ENCODE measurements at regions of chr2 and their contacts with region 1.

Region 1: DNA sequence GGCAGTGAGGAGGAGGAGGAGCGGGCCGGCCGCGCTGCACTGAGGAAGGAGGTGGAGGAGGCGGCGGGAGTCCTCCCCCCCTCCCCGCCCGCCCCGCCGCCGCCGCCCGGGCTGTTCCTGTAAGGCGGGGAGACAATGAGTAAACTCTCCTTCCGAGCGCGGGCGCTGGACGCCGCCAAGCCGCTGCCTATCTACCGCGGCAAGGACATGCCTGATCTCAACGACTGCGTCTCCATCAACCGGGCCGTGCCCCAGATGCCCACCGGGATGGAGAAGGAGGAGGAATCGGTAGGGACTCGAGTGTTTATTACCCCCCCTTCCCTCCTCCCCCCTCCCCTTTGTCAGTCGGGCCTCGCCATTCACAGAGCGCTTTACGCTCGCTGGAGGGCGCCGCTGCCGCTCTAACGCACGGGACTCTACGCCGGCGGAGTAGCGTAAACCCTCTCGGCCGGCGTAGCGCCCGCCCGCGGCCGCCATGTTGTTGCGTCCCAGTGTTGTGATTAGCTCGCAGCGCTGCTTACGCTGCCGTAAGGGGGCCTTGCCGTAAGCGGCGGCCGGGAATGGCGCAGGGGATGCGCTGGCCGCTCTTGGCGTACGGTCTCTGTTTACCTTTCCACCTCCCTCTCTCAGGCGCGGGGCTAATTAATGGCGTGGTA is 460 bp downstream of the EPC2 start:
- DNase-seq: peak; percentile 95
- ATAC-seq: peak; percentile 82
- H3K4me3 Mint-ChIP-seq: peak overlapping the region; percentile 89
- H3K27ac Mint-ChIP-seq: peak overlapping the region; percentile 99
- H3K4me1 Mint-ChIP-seq: peaks cover 46% of the 10 kb centered on the region
- H3K27me3 Mint-ChIP-seq: no peaks in the 10 kb centered on the region
- CTCF ChIP-seq: no peak

Region 2: DNA sequence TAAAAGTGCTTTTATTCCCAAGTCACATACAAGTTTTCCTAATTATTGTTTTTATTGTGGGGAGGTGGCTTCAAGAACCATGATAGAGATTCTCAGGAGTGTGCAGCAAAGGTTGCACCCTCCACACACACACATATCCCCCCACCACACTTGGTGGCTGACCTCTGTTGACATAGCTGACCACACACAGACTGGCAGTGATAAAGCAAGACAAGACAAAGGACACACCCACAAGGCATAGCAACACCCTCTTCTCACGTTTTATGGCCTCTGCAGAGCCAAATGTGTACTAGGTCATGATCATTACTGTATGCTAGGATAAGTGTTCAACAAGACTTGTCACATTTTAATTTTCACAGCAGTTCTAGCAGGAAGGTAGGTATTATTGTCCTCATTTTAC is 143.5 kb before region 1 on chr2:
- CTCF ChIA-PET with region 1: no interaction called
- POLR2A ChIA-PET with region 1: interaction called, 11 read pairs
- intact Hi-C with region 1: loop called (anchors 5 kb)
- DNase-seq: no peak
- ATAC-seq: no peak
- H3K4me3 Mint-ChIP-seq: no peak overlapping the region
- H3K27ac Mint-ChIP-seq: no peak overlapping the region
- H3K4me1 Mint-ChIP-seq: peaks cover 4% of the 10 kb centered on the region
- H3K27me3 Mint-ChIP-seq: no peaks in the 10 kb centered on the region
- CTCF ChIP-seq: no peak

Region 3: GRCh38 chr2:148622366-148622765 is 22.6 kb before region 1 on chr2:
- CTCF ChIA-PET with region 1: no interaction called
- POLR2A ChIA-PET with region 1: no interaction called
- intact Hi-C with region 1: loop called (anchors 1 kb)
- DNase-seq: no peak
- ATAC-seq: no peak
- H3K4me3 Mint-ChIP-seq: no peak overlapping the region
- H3K27ac Mint-ChIP-seq: no peak overlapping the region
- H3K4me1 Mint-ChIP-seq: peaks cover 14% of the 10 kb centered on the region
- H3K27me3 Mint-ChIP-seq: peaks cover 2% of the 10 kb centered on the region
- CTCF ChIP-seq: no peak

Region 4: DNA sequence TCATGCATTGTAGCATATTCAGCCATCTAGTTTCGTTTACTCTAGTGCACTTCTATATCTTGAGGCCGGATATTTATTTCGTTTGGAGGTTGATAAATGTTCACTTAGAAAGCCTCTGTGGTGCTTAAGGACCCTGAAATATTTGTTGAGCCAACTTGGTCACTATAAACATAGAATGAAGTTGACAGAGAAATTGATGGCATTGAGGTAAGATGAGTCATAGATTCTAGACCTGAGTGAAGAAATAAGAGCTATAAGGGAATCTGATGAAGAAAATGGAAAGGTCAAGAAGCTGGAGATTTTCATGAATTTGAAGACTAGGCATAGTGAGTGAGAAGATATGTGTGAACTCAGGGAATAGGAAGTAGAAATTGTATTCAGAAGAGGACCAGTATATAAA is 35.5 kb after region 1 on chr2:
- CTCF ChIA-PET with region 1: no interaction called
- POLR2A ChIA-PET with region 1: interaction called, 11 read pairs
- intact Hi-C with region 1: loop called (anchors 2 kb)
- DNase-seq: no peak
- ATAC-seq: no peak
- H3K4me3 Mint-ChIP-seq: no peak overlapping the region
- H3K27ac Mint-ChIP-seq: no peak overlapping the region
- H3K4me1 Mint-ChIP-seq: peaks cover 46% of the 10 kb centered on the region
- H3K27me3 Mint-ChIP-seq: no peaks in the 10 kb centered on the region
- CTCF ChIP-seq: no peak

Region 5: DNA sequence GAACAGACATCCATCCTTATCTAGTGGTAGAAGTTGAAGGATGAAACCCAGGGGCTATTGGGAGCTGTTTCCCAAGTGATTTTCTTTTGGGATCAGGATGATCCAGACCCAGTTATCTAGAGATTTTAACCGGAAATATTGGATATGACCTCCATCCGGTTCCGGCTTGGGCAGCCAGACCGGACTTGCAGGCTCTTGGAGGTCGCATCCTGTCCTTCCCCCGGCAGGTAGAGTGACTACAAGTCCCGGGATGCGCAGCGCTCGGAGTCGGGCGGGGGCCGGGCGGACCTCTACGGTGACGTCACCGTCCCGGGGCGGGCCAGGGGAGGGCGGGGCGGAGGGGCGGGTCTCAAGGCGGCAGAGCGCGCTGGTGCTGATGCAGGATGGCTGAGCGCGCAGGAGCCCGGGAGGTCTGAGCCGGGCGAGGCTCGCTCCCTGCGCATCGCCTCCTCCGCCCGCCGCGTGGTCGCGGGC is 229.9 kb after region 1 on chr2 and contains the start of gene KIF5C:
- CTCF ChIA-PET with region 1: no interaction called
- POLR2A ChIA-PET with region 1: no interaction called
- intact Hi-C with region 1: loop called (anchors 1 kb)
- DNase-seq: peak; percentile 68
- ATAC-seq: peak; percentile 93
- H3K4me3 Mint-ChIP-seq: peak within 1 kb of the TSS; percentile 82
- H3K27ac Mint-ChIP-seq: no peak within 1 kb of the TSS
- H3K4me1 Mint-ChIP-seq: peaks cover 14% of the 10 kb centered on the region
- H3K27me3 Mint-ChIP-seq: peaks cover 39% of the 10 kb centered on the region
- CTCF ChIP-seq: no peak
- total RNA-seq, gene KIF5C: 1.4 and 2.6 TPM in 2 replicates

Region 6: DNA sequence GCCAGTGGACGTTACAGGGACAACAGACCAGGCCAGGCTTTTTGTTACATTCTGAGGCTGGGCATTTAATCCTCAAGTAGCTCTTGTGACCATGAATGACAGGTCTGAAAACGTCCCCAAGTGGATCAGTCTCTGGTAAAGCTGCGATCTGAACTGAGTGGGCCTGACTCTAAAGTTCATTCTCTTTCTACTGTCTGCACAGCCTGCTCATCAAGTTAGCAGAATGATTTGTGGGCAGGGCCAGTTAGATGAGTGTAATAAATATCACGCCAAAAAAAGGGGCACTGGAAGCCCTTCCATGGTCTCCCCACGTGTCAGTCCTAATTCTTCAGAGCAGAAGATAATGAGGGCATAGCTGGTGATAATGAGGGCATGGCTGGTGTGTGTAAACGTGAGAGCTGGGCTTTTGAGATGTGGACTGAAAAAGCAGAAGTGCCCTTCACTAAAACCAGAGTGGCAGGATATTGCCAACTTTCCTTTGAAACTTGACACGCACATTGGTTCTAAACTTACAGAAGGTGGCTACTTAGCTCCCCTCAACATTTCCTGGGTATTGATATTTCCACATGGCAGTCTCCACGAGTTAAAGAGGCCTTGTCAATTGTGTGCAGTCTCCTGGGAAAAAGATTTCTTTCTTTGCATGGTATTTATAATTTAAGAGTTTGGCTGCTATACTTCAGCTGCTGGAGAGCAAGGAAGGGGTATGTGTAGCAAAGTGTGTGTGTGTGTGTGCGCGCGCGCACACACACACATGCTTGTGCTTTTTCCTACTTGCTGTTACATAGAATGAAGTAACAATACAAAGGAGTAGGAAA is 320.8 kb after region 1 on chr2:
- CTCF ChIA-PET with region 1: no interaction called
- POLR2A ChIA-PET with region 1: no interaction called
- intact Hi-C with region 1: no loop called
- DNase-seq: no peak
- ATAC-seq: no peak
- H3K4me3 Mint-ChIP-seq: no peak overlapping the region
- H3K27ac Mint-ChIP-seq: no peak overlapping the region
- H3K4me1 Mint-ChIP-seq: peaks cover 7% of the 10 kb centered on the region
- H3K27me3 Mint-ChIP-seq: peaks cover 2% of the 10 kb centered on the region
- CTCF ChIP-seq: no peak